ENCODE measurements at regions of chr4 and their contacts with region 1.

Region 1: DNA sequence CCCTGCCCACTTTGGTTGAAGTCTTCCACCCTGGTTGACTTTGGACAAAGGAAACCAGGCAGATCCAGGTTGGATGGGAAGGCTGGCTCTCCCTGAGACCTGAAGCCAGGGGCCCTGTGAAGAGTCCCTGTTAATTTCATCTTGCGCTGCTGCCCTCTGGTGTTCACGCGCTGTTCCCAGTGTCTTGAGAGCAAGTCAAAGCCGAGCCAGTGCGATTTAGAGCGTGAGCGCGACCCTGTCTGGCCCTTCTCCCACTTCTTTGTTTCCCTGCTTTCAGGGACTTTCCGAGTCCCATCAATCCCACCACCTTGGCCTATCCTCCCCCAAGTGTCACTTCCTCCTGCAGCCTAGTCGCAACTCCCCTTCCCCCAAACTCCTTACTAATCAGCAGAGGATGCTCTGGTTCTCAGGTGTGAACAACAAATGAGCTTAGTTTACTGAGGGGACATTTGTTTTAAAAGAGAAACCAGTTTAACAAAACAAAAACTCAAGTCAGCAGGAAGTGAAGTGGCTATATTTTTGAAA is 25.8 kb upstream of the CHRNA9 start:
- DNase-seq: peak; percentile 92
- ATAC-seq: peak; percentile 65
- H3K4me3 ChIP-seq: peak overlapping the region; percentile 59
- H3K27ac ChIP-seq: peak overlapping the region; percentile 76
- H3K4me1 ChIP-seq: peaks cover 58% of the 10 kb centered on the region
- H3K27me3 ChIP-seq: no peaks in the 10 kb centered on the region
- CTCF ChIP-seq: peak; percentile 87 to 90 (median 89)
- EP300 ChIP-seq: peak; percentile 68 to 90; a peak in 3 of 4 replicates
- POLR2A ChIP-seq: peak; percentile 49
- RAD21 ChIP-seq: peak; percentile 85

Region 2: DNA sequence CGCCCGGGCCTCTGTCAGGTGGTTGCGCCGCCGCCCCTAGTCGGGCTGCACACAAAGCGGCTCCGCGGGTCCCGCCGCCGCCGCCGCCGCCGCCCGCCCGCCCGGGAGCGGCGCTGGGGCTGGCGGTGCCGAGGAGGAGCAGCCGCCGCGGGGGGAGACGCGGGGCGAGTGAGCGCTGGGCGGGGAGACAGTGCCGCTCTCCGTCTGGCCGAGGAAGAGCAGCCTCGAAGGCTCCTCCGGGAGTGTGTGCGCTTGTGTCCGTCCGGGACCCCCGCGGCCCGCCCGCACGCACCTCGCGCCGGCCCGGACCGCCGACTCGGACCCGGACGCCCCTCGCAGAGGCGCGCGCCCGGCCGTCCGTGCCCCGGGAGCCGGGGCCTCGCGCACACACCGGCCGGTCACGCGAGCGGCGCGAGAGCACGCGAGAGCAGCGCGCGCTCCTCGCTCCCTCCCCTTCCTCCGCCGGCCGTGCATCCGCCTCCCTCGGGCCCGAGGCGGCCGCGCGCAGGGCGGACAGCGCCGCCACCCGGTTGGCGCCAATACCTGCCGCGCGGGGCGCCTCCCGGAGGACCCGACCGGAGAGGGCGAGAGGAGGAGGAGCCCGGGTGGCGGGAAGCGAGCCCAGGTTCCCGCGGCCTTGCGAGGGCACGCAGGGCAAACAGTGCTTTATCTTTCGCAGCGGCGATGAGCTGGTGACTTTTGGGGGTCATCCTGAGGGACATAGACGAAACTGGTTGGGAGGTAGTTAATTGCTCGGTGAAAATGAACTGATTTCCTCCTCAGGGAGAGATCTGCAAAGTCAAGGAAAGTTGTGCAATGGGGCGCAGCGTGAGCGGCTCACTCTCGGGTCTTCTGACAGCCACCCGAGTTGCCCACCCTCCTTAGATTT is 331.6 kb before region 1 on chr4 and contains the start of gene PDS5A:
- CTCF ChIA-PET with region 1: interaction called, 4 read pairs
- POLR2A ChIA-PET with region 1: no interaction called
- RAD21 ChIA-PET with region 1: interaction called, 3 read pairs
- SMC1A ChIA-PET with region 1: interaction called, 3 read pairs
- in situ Hi-C with region 1: no loop called
- intact Hi-C with region 1: loop called (anchors 5 kb)
- DNase-seq: peak; percentile 56
- ATAC-seq: peak; percentile 82
- H3K4me3 ChIP-seq: peak within 1 kb of the TSS; percentile 93
- H3K27ac ChIP-seq: peak within 1 kb of the TSS; percentile 95
- H3K4me1 ChIP-seq: peaks cover 3% of the 10 kb centered on the region
- H3K27me3 ChIP-seq: no peaks in the 10 kb centered on the region
- CTCF ChIP-seq: peak; percentile 84 to 99 (median 94)
- EP300 ChIP-seq: no peak
- POLR2A ChIP-seq: peak; percentile 79
- RAD21 ChIP-seq: peak; percentile 69
- polyA plus RNA-seq, gene PDS5A: 13.7 to 14.1 TPM

Region 3: GRCh38 chr4:40173470-40173875 is 135.8 kb before region 1 on chr4:
- CTCF ChIA-PET with region 1: interaction called, 3 read pairs
- POLR2A ChIA-PET with region 1: interaction called, 5 read pairs
- RAD21 ChIA-PET with region 1: interaction called, 5 read pairs
- SMC1A ChIA-PET with region 1: interaction called, 19 read pairs
- in situ Hi-C with region 1: no loop called
- intact Hi-C with region 1: no loop called
- DNase-seq: no peak
- ATAC-seq: peak; percentile 82
- H3K4me3 ChIP-seq: no peak overlapping the region
- H3K27ac ChIP-seq: peak overlapping the region; percentile 45
- H3K4me1 ChIP-seq: peaks cover 21% of the 10 kb centered on the region
- H3K27me3 ChIP-seq: no peaks in the 10 kb centered on the region
- CTCF ChIP-seq: no peak
- EP300 ChIP-seq: no peak
- POLR2A ChIP-seq: peak; percentile 47
- RAD21 ChIP-seq: no peak

Region 4: GRCh38 chr4:40199999-40200874 is 109.1 kb before region 1 on chr4:
- CTCF ChIA-PET with region 1: interaction called, 53 read pairs
- POLR2A ChIA-PET with region 1: interaction called, 23 read pairs
- RAD21 ChIA-PET with region 1: interaction called, 356 read pairs
- SMC1A ChIA-PET with region 1: interaction called, 374 read pairs
- in situ Hi-C with region 1: loop called (anchors 5 kb)
- intact Hi-C with region 1: loop called (anchors 1 kb)
- DNase-seq: peak; percentile 93
- ATAC-seq: peak; percentile 52
- H3K4me3 ChIP-seq: peak overlapping the region; percentile 88
- H3K27ac ChIP-seq: peak overlapping the region; percentile 92
- H3K4me1 ChIP-seq: peaks cover 8% of the 10 kb centered on the region
- H3K27me3 ChIP-seq: no peaks in the 10 kb centered on the region
- CTCF ChIP-seq: no peak
- EP300 ChIP-seq: peak; percentile 79 to 93
- POLR2A ChIP-seq: peak; percentile 79
- RAD21 ChIP-seq: no peak

Region 5: GRCh38 chr4:40228497-40229365 is 80.6 kb before region 1 on chr4:
- CTCF ChIA-PET with region 1: interaction called, 27 read pairs
- POLR2A ChIA-PET with region 1: interaction called, 22 read pairs
- RAD21 ChIA-PET with region 1: interaction called, 21 read pairs
- SMC1A ChIA-PET with region 1: interaction called, 82 read pairs
- in situ Hi-C with region 1: no loop called
- intact Hi-C with region 1: loop called (anchors 1 kb)
- DNase-seq: peak; percentile 77
- ATAC-seq: peak; percentile 56
- H3K4me3 ChIP-seq: peak overlapping the region; percentile 13; the same call in 1 of the 2 replicates
- H3K27ac ChIP-seq: peak overlapping the region; percentile 84
- H3K4me1 ChIP-seq: peaks cover 59% of the 10 kb centered on the region
- H3K27me3 ChIP-seq: no peaks in the 10 kb centered on the region
- CTCF ChIP-seq: peak; percentile 28 to 65 (median 45); a peak in 5 of 6 replicates
- EP300 ChIP-seq: peak in 1 of 2 experiments; percentile 66; a peak in 3 of 4 replicates
- POLR2A ChIP-seq: no peak
- RAD21 ChIP-seq: peak; percentile 44

Region 6: GRCh38 chr4:40325189-40326019 is 16.1 kb after region 1 on chr4:
- CTCF ChIA-PET with region 1: interaction called, 64 read pairs
- POLR2A ChIA-PET with region 1: interaction called, 5 read pairs
- RAD21 ChIA-PET with region 1: interaction called, 85 read pairs
- SMC1A ChIA-PET with region 1: interaction called, 43 read pairs
- in situ Hi-C with region 1: no loop called
- intact Hi-C with region 1: no loop called
- DNase-seq: no peak
- ATAC-seq: peak; percentile 98
- H3K4me3 ChIP-seq: no peak overlapping the region
- H3K27ac ChIP-seq: no peak overlapping the region
- H3K4me1 ChIP-seq: no peaks in the 10 kb centered on the region
- H3K27me3 ChIP-seq: no peaks in the 10 kb centered on the region
- CTCF ChIP-seq: peak; percentile 86 to 94 (median 89)
- EP300 ChIP-seq: no peak
- POLR2A ChIP-seq: no peak
- RAD21 ChIP-seq: peak; percentile 96